ENCODE measurements at regions of chr12 and their contacts with region 1.

Region 1: GRCh38 chr12:120649442-120650232 is 9.2 kb downstream of the CABP1 start:
- DNase-seq: peak; percentile 78
- H3K4me3 ChIP-seq: peak overlapping the region; percentile 44 to 66; a peak in 3 of 4 replicates
- H3K27ac ChIP-seq: no peak overlapping the region
- H3K4me1 ChIP-seq: peaks cover 0 to 14% of the 10 kb centered on the region in 2 experiments; a peak in 1 of 4 replicates
- H3K27me3 ChIP-seq: peaks cover 10% of the 10 kb centered on the region; the same call in 1 of the 2 replicates
- CTCF ChIP-seq: no peak
- EP300 ChIP-seq: no peak
- RAD21 ChIP-seq: no peak

Region 2: DNA sequence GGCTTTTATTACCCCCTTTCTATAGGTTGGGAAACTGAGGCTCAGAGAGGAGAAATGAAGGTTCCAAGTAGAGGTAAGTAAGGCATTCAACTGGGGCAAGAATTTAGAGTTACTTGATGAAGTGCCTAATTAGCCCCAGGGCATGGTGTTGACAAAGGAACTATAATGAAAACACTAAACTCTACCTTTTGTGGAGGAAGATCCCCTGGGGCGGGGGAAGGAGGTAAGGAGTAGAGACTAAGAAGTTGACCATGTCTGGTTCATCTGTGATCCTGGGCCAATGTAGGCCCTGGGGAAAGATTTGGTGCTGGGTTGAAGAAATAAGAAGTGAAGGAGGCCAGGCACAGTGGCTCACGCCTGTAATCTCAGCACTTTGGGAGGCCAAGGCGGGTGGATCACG is 227.9 kb before region 1 on chr12:
- CTCF ChIA-PET with region 1: no interaction called
- POLR2A ChIA-PET with region 1: no interaction called
- DNase-seq: no peak
- H3K4me3 ChIP-seq: no peak overlapping the region
- H3K27ac ChIP-seq: no peak overlapping the region
- H3K4me1 ChIP-seq: no peaks in the 10 kb centered on the region
- H3K27me3 ChIP-seq: no peaks in the 10 kb centered on the region; the same call in 1 of the 2 replicates
- CTCF ChIP-seq: no peak
- EP300 ChIP-seq: no peak
- RAD21 ChIP-seq: no peak

Region 3: DNA sequence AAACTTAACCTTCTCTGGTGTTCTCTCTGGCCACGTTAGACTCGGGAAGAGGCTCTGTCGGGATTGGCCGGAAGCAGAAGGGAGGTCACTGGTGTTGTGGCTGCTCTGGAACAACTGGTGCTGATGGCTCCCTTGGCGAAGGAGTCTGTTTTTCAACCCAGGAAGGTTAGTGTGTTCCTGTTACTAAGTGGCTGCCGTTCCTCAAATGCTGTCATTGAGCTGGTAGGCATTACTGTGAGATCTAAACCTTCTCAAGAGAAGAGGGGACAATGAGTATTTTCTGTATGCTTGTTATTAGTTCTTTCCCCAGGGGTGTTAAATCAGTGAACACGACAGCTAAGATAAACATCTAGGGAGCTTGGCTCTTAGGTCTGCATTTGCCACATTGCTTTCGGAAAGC is 86.7 kb before region 1 on chr12:
- CTCF ChIA-PET with region 1: no interaction called
- POLR2A ChIA-PET with region 1: no interaction called
- DNase-seq: no peak
- H3K4me3 ChIP-seq: no peak overlapping the region
- H3K27ac ChIP-seq: no peak overlapping the region
- H3K4me1 ChIP-seq: no peaks in the 10 kb centered on the region
- H3K27me3 ChIP-seq: no peaks in the 10 kb centered on the region
- CTCF ChIP-seq: no peak
- EP300 ChIP-seq: no peak
- RAD21 ChIP-seq: no peak

Region 4: GRCh38 chr12:120580787-120581723 is 68.6 kb before region 1 on chr12 and contains the start of gene POP5:
- CTCF ChIA-PET with region 1: interaction called, 94 read pairs
- POLR2A ChIA-PET with region 1: no interaction called
- DNase-seq: peak; percentile 93
- H3K4me3 ChIP-seq: peak within 1 kb of the TSS; percentile 82 to 97
- H3K27ac ChIP-seq: peak within 1 kb of the TSS; percentile 25 to 71; a peak in 3 of 4 replicates
- H3K4me1 ChIP-seq: peaks cover 0 to 8% of the 10 kb centered on the region in 2 experiments; a peak in 2 of 4 replicates
- H3K27me3 ChIP-seq: no peaks in the 10 kb centered on the region
- CTCF ChIP-seq: no peak
- EP300 ChIP-seq: no peak
- RAD21 ChIP-seq: no peak
- polyA plus RNA-seq, gene POP5: 129 and 148 TPM in 2 replicates

Region 5: DNA sequence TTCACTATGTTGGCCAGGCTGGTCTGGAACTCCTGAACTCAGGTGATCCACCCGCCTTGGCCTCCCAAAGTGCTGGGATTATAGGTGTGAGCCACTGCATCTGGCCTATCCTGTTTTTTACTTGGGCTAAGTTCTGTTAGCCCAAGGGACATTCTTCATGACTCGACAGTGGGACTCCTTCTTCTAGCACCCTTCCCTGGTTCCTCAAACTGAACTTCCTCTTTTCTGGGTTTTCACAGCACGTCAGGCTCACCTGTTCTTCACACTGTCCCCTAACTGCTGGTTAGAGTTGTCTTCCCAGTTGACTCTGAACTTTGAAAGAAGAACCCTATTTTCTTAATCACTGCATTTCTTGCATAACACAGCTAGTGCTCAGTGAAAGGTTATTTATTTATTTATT is 13.2 kb after region 1 on chr12:
- CTCF ChIA-PET with region 1: interaction called, 49 read pairs
- POLR2A ChIA-PET with region 1: no interaction called
- DNase-seq: no peak
- H3K4me3 ChIP-seq: no peak overlapping the region
- H3K27ac ChIP-seq: no peak overlapping the region
- H3K4me1 ChIP-seq: no peaks in the 10 kb centered on the region
- H3K27me3 ChIP-seq: peaks cover 2% of the 10 kb centered on the region; the same call in 1 of the 2 replicates
- CTCF ChIP-seq: no peak
- EP300 ChIP-seq: no peak
- RAD21 ChIP-seq: no peak

Region 6: GRCh38 chr12:120686690-120687577 is 37.3 kb after region 1 on chr12 and contains the start of gene MLEC:
- CTCF ChIA-PET with region 1: interaction called, 34 read pairs
- POLR2A ChIA-PET with region 1: interaction called, 5 read pairs
- DNase-seq: peak; percentile 99
- H3K4me3 ChIP-seq: peak within 1 kb of the TSS; percentile 87 to 90
- H3K27ac ChIP-seq: peak within 1 kb of the TSS; percentile 98 to 99
- H3K4me1 ChIP-seq: peaks cover 4 to 19% of the 10 kb centered on the region in 2 experiments; a peak in 3 of 4 replicates
- H3K27me3 ChIP-seq: no peaks in the 10 kb centered on the region
- CTCF ChIP-seq: no peak
- EP300 ChIP-seq: no peak; a peak in 1 of 4 replicates
- RAD21 ChIP-seq: peak; percentile 33; the same call in 1 of the 2 replicates
- polyA plus RNA-seq, gene MLEC: 23.4 and 27.8 TPM in 2 replicates

Region 7: DNA sequence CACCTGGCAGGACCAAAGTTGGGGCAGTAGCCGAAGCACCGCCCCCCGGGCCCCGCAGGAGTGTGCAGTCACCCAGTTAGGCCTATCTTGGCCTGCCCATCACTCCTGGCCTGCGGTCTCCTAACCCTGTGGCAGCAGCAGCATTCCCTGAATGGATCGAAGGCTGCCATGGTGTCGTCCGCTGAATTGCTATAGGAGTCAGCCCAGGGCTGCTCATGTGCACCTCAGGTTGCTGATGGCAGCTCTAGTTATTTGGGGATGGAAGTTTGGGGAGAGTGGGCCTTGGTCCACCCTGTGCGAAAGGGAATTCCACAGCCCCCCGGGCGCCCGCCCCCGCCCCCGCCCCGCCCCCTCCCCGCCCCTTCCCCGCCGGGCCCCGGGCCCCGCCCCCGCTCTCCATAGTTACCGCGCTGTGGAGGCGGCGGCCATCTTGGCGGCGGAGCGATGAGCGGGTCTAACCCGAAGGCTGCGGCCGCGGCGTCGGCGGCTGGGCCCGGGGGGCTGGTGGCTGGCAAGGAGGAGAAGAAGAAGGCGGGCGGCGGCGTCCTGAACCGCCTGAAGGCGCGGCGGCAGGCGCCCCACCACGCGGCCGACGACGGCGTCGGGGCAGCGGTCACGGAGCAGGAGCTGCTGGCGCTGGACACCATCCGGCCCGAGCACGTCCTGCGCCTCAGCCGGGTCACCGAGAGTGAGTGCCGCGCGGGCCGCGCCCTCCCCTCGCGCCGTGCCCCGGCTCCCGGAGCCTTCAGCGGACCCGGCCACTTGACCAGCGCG is 60.6 kb after region 1 on chr12 and contains the start of gene UNC119B:
- CTCF ChIA-PET with region 1: interaction called, 67 read pairs
- POLR2A ChIA-PET with region 1: interaction called, 6 read pairs
- DNase-seq: peak; percentile 96
- H3K4me3 ChIP-seq: peak within 1 kb of the TSS; percentile 78 to 90
- H3K27ac ChIP-seq: peak within 1 kb of the TSS; percentile 63 to 79; a peak in 3 of 4 replicates
- H3K4me1 ChIP-seq: peaks cover 0 to 29% of the 10 kb centered on the region in 2 experiments; a peak in 2 of 4 replicates
- H3K27me3 ChIP-seq: no peaks in the 10 kb centered on the region
- CTCF ChIP-seq: no peak
- EP300 ChIP-seq: no peak
- RAD21 ChIP-seq: no peak
- polyA plus RNA-seq, gene UNC119B: 23.6 and 32.0 TPM in 2 replicates

Region 8: GRCh38 chr12:120961604-120962531 is 312.2 kb after region 1 on chr12:
- CTCF ChIA-PET with region 1: interaction called, 17 read pairs
- POLR2A ChIA-PET with region 1: no interaction called
- DNase-seq: no peak
- H3K4me3 ChIP-seq: no peak overlapping the region
- H3K27ac ChIP-seq: no peak overlapping the region
- H3K4me1 ChIP-seq: no peaks in the 10 kb centered on the region
- H3K27me3 ChIP-seq: no peaks in the 10 kb centered on the region; the same call in 1 of the 2 replicates
- CTCF ChIP-seq: no peak
- EP300 ChIP-seq: no peak
- RAD21 ChIP-seq: no peak